IMR-90 (cell line): ENCODE measurements at regions of chr19 and their contacts with region 1.

Region 1: GRCh38 chr19:48110350-48110966 is at the start of gene PLA2G4C:
- DNase-seq: peak; percentile 95
- ATAC-seq: peak; percentile 86
- H3K4me3 ChIP-seq: peak within 1 kb of the TSS; percentile 57
- H3K27ac ChIP-seq: peak within 1 kb of the TSS; percentile 91
- H3K4me1 ChIP-seq: no peaks in the 10 kb centered on the region; the same call in 1 of the 2 replicates
- H3K27me3 ChIP-seq: no peaks in the 10 kb centered on the region
- CTCF ChIP-seq: no peak
- POLR2A ChIP-seq: peak; percentile 78; the same call in 1 of the 2 replicates
- RAD21 ChIP-seq: no peak
- total RNA-seq, gene PLA2G4C: 4.3 and 5.0 TPM in 2 replicates

Region 2: DNA sequence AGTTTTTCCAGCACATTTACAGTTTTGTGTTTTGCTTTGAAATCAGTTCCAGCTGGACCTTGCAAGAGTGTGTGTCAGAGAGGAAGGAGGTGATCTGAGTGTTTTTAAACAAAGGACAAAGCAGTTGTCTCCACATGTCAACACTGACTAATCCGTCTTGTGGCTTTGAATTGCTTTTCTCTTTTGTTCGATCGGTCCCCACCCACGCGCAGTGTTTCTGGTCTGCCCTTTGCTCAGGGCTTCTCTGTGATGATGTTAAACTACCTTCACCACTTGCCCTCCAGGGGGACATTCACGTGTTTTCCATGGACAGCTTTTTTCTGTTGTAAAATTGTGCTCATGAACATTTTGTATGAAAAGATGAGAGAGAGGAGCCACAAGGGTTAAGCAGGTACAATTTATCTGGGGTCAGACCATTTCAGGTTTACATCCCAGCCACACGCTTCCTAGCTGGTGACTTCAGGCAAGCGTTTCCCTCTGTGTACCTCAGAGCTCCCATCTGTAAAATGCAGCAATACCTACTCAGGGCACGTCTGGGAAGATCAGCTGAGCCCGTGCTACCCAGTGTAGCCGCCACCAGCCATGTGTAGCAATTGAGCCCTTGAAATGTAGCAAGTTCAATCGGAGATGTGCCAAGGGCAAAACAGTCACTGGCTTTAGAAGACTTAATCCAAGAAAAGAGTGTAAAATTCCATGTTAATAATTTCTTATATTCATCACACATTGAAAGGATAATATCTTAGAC is 13.6 kb after region 1 on chr19:
- CTCF ChIA-PET with region 1: interaction called, 6 read pairs
- POLR2A ChIA-PET with region 1: no interaction called
- dilution Hi-C with region 1: no loop called
- in situ Hi-C with region 1: no loop called
- intact Hi-C with region 1: loop called (anchors 2 kb)
- DNase-seq: peak; percentile 73
- ATAC-seq: peak; percentile 56
- H3K4me3 ChIP-seq: no peak overlapping the region
- H3K27ac ChIP-seq: no peak overlapping the region
- H3K4me1 ChIP-seq: no peaks in the 10 kb centered on the region
- H3K27me3 ChIP-seq: no peaks in the 10 kb centered on the region
- CTCF ChIP-seq: peak; percentile 17; the same call in 1 of the 2 replicates
- POLR2A ChIP-seq: no peak
- RAD21 ChIP-seq: no peak

Region 3: GRCh38 chr19:48152551-48152950 is 42.1 kb after region 1 on chr19:
- CTCF ChIA-PET with region 1: interaction called, 8 read pairs
- POLR2A ChIA-PET with region 1: interaction called, 3 read pairs
- dilution Hi-C with region 1: no loop called
- in situ Hi-C with region 1: loop called (anchors 5 kb)
- intact Hi-C with region 1: loop called (anchors 1 kb)
- DNase-seq: peak; percentile 75
- ATAC-seq: peak; percentile 95
- H3K4me3 ChIP-seq: no peak overlapping the region
- H3K27ac ChIP-seq: no peak overlapping the region
- H3K4me1 ChIP-seq: no peaks in the 10 kb centered on the region
- H3K27me3 ChIP-seq: no peaks in the 10 kb centered on the region
- CTCF ChIP-seq: peak; percentile 82
- POLR2A ChIP-seq: no peak
- RAD21 ChIP-seq: peak; percentile 79

Region 4: DNA sequence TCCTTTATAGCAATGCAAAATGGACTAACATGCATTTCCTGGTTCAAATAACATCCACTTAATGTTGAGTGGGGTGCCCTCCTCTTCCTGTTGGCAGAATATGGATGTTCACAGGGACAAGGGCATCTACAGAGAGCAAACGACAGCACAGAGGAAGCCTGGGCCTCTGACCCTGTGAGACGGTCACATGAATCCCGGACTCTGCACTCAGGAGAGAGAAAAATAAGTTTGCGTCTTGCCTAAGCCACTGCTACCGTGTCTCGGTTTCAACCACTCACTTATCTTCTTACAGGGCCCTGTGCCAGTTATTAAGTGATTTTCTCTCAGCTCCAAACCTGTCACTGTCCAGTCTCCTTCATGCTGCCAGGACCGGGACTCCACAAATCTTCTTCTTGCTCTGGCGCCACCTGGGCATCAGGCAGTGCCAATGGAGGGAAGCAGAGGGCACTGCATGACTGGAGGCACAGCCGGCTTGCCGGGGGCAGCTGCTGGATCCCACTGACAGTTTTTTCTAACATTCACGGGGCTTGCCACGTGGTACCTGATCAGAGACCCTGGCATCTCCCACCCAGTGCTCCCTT is 47.8 kb after region 1 on chr19:
- CTCF ChIA-PET with region 1: interaction called, 3 read pairs
- POLR2A ChIA-PET with region 1: interaction called, 3 read pairs
- dilution Hi-C with region 1: no loop called
- in situ Hi-C with region 1: loop called (anchors 5 kb)
- intact Hi-C with region 1: no loop called
- DNase-seq: no peak
- ATAC-seq: no peak
- H3K4me3 ChIP-seq: no peak overlapping the region
- H3K27ac ChIP-seq: no peak overlapping the region
- H3K4me1 ChIP-seq: no peaks in the 10 kb centered on the region
- H3K27me3 ChIP-seq: no peaks in the 10 kb centered on the region
- CTCF ChIP-seq: no peak
- POLR2A ChIP-seq: no peak
- RAD21 ChIP-seq: no peak

Region 5: GRCh38 chr19:48186541-48186991 is 76.1 kb after region 1 on chr19:
- CTCF ChIA-PET with region 1: no interaction called
- POLR2A ChIA-PET with region 1: no interaction called
- dilution Hi-C with region 1: no loop called
- in situ Hi-C with region 1: no loop called
- intact Hi-C with region 1: no loop called
- DNase-seq: no peak
- ATAC-seq: no peak
- H3K4me3 ChIP-seq: no peak overlapping the region
- H3K27ac ChIP-seq: no peak overlapping the region
- H3K4me1 ChIP-seq: no peaks in the 10 kb centered on the region
- H3K27me3 ChIP-seq: no peaks in the 10 kb centered on the region
- CTCF ChIP-seq: no peak
- POLR2A ChIP-seq: no peak
- RAD21 ChIP-seq: no peak

Region 6: GRCh38 chr19:48255376-48256303 is 145.2 kb after region 1 on chr19 and contains the start of gene CARD8:
- CTCF ChIA-PET with region 1: no interaction called
- POLR2A ChIA-PET with region 1: no interaction called
- dilution Hi-C with region 1: no loop called
- in situ Hi-C with region 1: no loop called
- intact Hi-C with region 1: loop called (anchors 2 kb)
- DNase-seq: peak; percentile 88
- ATAC-seq: peak; percentile 96
- H3K4me3 ChIP-seq: peak within 1 kb of the TSS; percentile 72
- H3K27ac ChIP-seq: peak within 1 kb of the TSS; percentile 89
- H3K4me1 ChIP-seq: no peaks in the 10 kb centered on the region
- H3K27me3 ChIP-seq: no peaks in the 10 kb centered on the region
- CTCF ChIP-seq: 0 out of 2 replicates have a peak, but pooled peaks have one; percentile 0
- POLR2A ChIP-seq: peak; percentile 56; the same call in 1 of the 2 replicates
- RAD21 ChIP-seq: no peak; the same call in 1 of the 2 replicates
- total RNA-seq, gene CARD8: 11.3 and 12.5 TPM in 2 replicates